Right ventricle myocardium inferior (tissue), 1 donor: ENCODE measurements at regions of chr20 and their contacts with region 1.

Region 1: GRCh38 chr20:62143118-62143973 is at the starts of genes PSMA7 and SS18L1:
- DNase-seq: peak; percentile 94
- ATAC-seq: peak; percentile 96
- total RNA-seq, gene PSMA7: 230 TPM
- total RNA-seq, gene SS18L1: 7.8 TPM

Region 2: DNA sequence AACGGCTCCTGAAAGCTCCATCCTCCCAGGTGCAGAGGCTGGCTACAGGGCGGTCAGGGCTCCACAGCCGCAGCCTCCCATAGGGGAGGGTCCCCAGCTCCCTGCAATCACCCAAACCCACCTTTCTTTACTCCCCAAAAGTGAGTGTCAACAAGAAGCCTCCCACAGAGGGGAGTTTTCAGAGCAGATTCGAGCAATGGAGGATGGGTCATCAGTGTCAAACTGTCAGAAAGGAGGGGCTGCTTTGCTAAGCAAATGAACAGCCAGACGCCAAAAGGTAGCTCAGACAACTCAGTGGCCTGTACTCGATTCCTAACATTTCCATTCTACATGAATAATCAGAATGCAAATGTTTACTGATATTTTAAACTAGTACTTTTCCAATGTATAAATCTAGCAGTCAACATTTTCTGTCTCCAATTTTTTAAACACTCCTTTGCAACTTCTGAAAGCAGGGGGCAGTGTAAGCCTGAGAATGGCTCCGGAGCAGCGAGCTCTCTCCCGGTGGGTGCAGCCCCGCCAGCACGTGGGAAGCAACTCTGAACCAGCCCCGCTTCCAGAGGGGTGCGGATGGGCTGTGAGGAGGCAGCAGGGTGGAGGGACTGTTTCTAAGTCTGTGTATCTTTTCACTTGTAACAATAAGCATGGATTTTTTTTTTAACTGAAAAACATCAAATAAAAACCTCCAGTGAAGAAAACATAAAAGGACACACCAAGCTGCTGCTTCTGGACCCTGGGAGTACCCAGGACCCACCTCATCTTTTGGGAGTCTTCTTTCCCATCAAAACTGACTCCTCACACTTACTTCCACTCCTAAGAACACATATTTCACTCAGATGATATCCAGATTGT is 132.6 kb before region 1 on chr20:
- intact Hi-C with region 1: loop called (anchors 5 kb)
- DNase-seq: no peak
- ATAC-seq: peak; percentile 72

Region 3: GRCh38 chr20:62065669-62066338 is 77.5 kb before region 1 on chr20 and contains the start of gene TAF4:
- intact Hi-C with region 1: loop called (anchors 5 kb)
- DNase-seq: peak; percentile 90
- ATAC-seq: peak; percentile 67
- total RNA-seq, gene TAF4: 10.7 TPM

Region 4: DNA sequence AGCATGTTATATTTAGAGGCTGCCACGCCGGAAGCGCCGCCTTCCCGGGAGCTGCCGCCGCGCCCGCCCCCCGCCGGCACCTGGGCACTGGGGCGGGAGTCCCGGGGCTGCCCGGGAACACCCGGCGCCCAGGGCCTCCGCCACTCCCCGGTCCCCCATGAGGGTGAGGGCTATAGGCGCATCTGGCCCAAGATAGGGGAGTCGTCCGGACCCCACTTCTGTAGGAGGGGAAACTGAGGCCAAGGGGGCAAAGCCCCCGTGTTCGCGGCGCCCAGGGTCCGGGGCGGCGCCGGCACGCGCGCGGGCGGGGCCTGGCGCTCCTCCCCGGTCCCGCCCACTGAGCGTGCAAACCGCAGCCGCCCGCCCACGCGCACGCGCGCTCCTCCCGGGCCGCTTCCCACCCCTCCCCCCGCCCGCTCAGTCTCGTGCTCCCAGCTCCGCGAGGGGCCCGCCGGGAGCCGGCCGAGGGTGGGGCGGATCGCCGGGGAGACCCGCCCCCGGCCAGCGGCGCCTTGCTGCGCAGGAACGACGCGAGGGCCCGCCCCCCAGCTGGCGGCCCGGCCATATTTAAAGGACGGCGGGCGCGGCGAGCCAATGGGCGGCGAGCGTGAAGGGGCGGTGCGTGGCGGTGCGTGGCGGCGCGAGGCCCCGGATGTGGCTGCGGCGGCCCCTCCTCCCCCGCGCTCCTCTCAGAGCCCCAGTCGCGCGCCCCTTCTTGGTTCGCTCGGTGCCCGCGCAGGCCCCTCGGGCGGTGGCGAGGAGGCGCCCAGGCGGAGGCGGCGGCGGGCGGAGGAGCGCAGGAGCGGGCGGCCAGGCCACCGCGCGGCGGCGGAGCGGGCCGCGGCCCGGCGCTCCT is 21.3 kb before region 1 on chr20 and contains the start of gene LSM14B:
- intact Hi-C with region 1: loop called (anchors 2 kb)
- DNase-seq: peak; percentile 98
- ATAC-seq: peak; percentile 94
- total RNA-seq, gene LSM14B: 55.2 TPM

Region 5: GRCh38 chr20:62182613-62183425 is 39.5 kb after region 1 on chr20 and contains the start of gene MTG2:
- intact Hi-C with region 1: loop called (anchors 5 kb)
- DNase-seq: peak; percentile 96
- ATAC-seq: peak; percentile 97
- total RNA-seq, gene MTG2: 21.6 TPM

Region 6: DNA sequence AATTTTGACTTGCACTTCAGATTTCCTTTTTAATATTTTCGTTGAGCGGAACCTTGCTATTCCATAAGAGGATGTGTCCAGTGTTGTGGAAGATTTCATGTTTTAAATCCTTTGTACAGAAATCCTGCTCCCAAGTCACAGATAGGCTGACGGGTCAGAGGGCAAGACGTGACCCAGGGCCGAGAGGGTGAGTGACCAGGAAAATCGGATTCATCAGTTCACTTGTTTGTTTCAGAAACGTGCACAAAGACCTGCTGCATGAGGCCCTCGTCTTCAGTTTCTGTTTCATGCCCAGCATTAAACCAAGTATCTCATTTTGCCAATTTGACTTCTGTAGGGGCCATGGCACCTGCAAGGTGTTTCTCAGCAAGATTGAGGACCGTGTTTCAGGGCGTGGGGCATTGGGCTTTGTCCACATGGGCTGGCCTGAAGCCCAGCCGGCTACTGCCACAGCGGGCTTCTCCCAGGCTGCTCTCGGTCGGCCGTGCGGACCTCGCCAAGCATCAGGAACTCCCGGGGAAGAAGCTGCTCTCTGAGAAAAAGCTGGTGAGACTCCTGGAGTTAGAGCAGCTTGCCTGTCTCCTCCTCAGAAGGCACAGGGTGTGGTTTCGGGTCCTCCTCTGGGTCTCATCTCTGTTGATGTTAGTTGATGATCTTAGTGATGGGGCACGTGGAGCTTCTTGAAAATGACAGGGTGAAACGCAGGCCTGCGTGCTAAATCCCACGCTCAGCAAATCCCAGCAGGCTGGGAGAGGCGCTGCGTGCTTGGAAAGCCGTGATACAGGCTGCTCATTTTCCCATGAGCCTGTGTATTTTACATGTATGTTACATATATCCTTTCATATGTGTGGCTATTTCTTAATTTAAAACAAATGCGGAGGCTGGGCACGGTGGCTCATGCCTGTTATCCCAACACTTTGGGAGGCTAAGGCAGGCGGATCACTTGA is 50.0 kb after region 1 on chr20:
- intact Hi-C with region 1: no loop called
- DNase-seq: peak; percentile 51
- ATAC-seq: no peak

Region 7: GRCh38 chr20:62237801-62238571 is 94.6 kb after region 1 on chr20 and contains the start of gene OSBPL2:
- intact Hi-C with region 1: loop called (anchors 5 kb)
- DNase-seq: peak; percentile 99
- ATAC-seq: peak; percentile 98
- total RNA-seq, gene OSBPL2: 59.5 TPM

Region 8: DNA sequence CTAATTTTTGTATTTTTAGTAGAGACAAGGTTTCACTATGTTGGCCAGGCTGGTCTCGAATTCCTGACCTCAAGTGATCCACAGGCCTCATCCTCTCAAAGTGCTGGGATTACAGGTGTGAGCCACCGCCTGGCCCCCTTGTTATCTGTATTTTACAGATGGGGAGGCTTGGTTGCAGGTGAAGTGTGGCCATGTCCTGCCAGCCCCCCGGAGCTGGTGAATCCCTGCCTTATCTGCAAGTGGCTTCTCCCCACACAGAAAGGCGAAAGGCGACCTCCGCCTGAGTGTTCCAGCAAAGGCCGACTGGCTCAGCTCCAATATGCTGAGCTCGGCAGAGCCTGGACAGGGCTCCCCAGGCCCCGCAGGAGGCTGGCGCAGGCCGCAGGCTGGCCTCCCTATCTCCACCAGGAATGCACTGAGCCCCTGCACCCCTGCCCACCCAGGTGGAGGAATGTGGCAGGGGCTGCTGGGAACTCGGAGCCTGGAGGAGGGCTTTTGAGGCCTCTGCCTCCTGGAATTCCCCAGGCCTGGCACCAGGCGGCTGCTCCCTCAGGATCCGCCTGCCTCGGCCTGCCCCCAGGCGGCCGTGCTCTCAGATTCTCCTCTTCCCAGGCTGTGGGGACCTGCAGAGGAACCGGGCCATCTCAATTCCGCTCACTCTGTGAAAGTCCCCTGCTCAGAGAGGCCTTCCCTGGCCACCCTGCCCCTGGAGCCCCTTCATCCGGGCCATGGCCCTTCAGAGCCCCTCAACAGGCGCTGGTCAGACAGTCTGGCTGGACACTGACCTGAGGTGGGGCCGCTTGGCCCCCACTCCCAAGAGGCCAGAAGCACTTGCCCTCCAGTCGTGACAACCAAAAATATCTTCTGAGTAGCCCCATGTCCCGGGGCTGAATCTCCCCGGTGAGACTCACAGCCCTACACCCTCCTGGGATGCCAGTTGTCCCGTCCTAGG is 233.0 kb after region 1 on chr20:
- intact Hi-C with region 1: loop called (anchors 10 kb)
- DNase-seq: no peak
- ATAC-seq: peak; percentile 80